Dendritic cell treated with granulocyte-macrophage colony-stimulating factor and Interleukin-4, amounts not matched to agents 40 ng/mL and 50 ng/mL, for 4 days (primary cell): ENCODE measurements at regions of chr2 and their contacts with region 1.

Region 1: GRCh38 chr2:144615866-144616565 is 96.1 kb upstream of the ZEB2 start:
- H3K4me3 Mint-ChIP-seq: no peak overlapping the region
- H3K27ac Mint-ChIP-seq: peak overlapping the region; percentile 55
- H3K4me1 Mint-ChIP-seq: peaks cover 36% of the 10 kb centered on the region
- H3K27me3 Mint-ChIP-seq: no peaks in the 10 kb centered on the region

Region 2: DNA sequence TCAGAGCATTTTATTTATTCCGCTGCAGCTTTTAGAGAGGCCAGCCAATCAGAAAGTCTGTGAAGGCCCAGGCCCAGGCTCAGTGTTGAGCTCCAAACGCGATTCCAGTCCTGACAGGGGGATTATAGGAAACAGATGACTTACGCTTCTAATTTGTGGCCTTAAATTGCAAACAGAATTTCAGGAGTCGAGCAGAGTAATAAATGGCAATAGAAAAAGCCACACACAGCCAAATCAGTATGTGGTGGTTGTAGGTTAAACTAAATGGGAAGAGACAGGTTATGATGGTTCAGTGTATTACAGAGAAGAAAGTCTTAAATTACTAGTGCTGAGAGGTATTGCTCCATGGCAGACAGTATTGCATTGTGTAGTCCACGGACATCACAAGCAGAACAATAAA is 34.9 kb after region 1 on chr2:
- intact Hi-C with region 1: loop called (anchors 5 kb)
- H3K4me3 Mint-ChIP-seq: no peak overlapping the region
- H3K27ac Mint-ChIP-seq: no peak overlapping the region
- H3K4me1 Mint-ChIP-seq: peaks cover 27% of the 10 kb centered on the region
- H3K27me3 Mint-ChIP-seq: no peaks in the 10 kb centered on the region

Region 3: DNA sequence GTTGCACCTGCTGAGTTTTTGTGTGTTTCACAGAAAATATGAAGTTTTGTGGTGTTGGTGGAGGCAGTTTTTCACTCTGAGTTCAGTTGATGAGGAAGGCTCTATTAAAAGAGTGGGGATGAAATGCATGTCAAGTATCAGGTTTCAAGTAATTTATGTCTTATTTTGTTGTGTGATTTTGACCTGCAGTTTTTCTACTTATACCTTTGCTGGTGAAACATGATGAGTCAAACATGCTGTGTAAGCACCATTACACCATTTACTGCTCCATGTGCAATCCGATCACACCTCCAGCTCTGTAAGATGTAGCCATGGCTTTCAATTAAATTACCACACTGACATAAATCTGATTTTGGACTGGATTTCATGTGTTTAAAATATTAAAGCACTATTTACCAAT is 78.4 kb after region 1 on chr2:
- intact Hi-C with region 1: no loop called
- H3K4me3 Mint-ChIP-seq: no peak overlapping the region
- H3K27ac Mint-ChIP-seq: peak overlapping the region; percentile 95
- H3K4me1 Mint-ChIP-seq: peaks cover 34% of the 10 kb centered on the region
- H3K27me3 Mint-ChIP-seq: no peaks in the 10 kb centered on the region